HepG2 (cell line): ENCODE measurements at regions of chr14 and their contacts with region 1.

Region 1: GRCh38 chr14:102096214-102097114 is 9.6 kb upstream of the HSP90AA1 start:
- DNase-seq: peak; percentile 63
- ATAC-seq: peak; percentile 83
- H3K4me3 ChIP-seq: peak overlapping the region in 1 of 3 experiments; percentile 20; a peak in 1 of 6 replicates
- H3K27ac ChIP-seq: no peak overlapping the region
- H3K4me1 ChIP-seq: peaks cover 37% of the 10 kb centered on the region
- H3K27me3 ChIP-seq: peaks cover 2 to 25% of the 10 kb centered on the region in 2 experiments; a peak in 3 of 5 replicates
- CTCF ChIP-seq: peak; percentile 88
- EP300 ChIP-seq: no peak
- POLR2A ChIP-seq: no peak
- RAD21 ChIP-seq: peak; percentile 75

Region 2: DNA sequence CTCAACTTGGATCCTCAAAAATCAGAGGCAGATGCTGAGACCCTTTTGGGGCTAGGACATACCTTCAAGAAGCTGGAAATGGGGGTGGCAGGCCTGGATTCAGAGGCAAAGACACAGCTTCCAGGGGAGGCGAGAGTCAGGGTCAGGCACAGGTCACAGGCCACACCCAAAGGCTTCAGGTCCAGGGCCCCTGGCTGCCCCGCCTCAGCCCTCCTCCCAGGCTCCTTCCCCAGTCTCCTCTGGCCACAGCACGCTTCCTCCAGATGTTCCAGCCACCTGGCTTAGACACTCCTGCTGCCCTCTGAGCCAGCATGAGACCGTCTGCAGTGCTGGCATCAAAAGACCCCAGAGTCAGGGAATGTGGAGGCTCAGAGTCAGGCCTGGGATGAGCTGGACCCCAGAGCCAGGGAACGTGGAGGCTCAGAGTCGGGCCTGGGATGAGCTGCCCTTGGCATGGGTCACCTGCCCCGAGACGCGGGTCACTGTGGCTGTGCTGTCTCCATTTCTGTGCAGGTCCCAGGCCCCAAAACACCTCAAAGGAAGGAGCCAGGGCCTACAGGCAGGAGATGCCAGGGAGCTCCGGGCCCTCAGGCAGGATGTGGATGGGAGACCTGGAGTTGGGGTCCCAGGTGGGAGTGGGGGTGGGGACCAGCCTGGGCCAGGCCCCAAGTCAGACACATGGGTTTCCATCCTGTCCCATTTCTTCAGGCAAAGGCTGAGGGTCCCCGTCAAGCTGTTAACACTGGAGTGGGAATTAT is 476.3 kb before region 1 on chr14:
- CTCF ChIA-PET with region 1: no interaction called
- POLR2A ChIA-PET with region 1: no interaction called
- in situ Hi-C with region 1: no loop called
- intact Hi-C with region 1: no loop called
- DNase-seq: no peak
- ATAC-seq: no peak
- H3K4me3 ChIP-seq: no peak overlapping the region
- H3K27ac ChIP-seq: no peak overlapping the region
- H3K4me1 ChIP-seq: no peaks in the 10 kb centered on the region
- H3K27me3 ChIP-seq: peaks cover 0 to 20% of the 10 kb centered on the region in 2 experiments; a peak in 2 of 5 replicates
- CTCF ChIP-seq: no peak
- EP300 ChIP-seq: no peak
- POLR2A ChIP-seq: no peak
- RAD21 ChIP-seq: no peak

Region 3: DNA sequence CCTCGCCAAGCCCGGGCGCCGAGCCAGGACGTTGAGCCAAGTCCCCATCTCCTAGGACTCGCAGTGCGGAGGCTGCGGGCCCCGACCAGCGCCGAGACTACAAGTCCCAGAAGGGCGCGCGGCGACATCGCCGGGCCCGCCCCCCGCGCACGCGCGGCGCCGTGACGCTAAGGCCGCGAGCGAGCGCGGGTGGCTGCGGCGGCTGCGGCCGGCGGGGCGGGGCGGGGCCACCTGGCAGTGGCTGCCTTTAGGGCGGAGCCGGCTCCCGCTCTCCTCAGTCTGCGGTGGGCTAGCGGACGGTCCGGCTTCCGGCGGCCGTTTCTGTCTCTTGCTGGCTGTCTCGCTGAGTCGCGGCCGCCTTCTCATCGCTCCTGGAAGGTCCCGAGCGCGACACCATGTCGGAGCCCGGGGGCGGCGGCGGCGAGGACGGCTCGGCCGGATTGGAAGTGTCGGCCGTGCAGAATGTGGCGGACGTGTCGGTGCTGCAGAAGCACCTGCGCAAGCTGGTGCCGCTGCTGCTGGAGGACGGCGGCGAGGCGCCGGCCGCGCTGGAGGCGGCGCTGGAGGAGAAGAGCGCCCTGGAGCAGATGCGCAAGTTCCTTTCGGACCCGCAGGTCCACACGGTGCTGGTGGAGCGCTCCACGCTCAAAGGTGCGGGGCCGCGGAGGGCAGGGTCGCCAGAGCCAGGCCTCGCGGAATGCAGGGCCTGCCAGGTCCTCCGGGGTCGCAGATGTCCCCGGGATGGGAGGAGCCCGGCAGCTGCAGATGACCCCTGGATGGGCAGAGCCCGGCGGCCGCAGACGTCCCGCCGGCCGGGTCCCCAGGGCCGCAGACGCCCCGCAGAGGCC is 131.9 kb before region 1 on chr14 and contains the start of gene DYNC1H1:
- CTCF ChIA-PET with region 1: interaction called, 14 read pairs
- POLR2A ChIA-PET with region 1: no interaction called
- in situ Hi-C with region 1: loop called (anchors 5 kb)
- intact Hi-C with region 1: loop called (anchors 2 kb)
- DNase-seq: peak; percentile 83
- ATAC-seq: peak; percentile 74
- H3K4me3 ChIP-seq: peak within 1 kb of the TSS; percentile 96 to 100 (median 99)
- H3K27ac ChIP-seq: peak within 1 kb of the TSS; percentile 90
- H3K4me1 ChIP-seq: peaks cover 75% of the 10 kb centered on the region
- H3K27me3 ChIP-seq: no peaks in the 10 kb centered on the region; a peak in 1 of 5 replicates
- CTCF ChIP-seq: no peak
- EP300 ChIP-seq: no peak
- POLR2A ChIP-seq: peak; percentile 96 to 97
- RAD21 ChIP-seq: peak; percentile 44; the same call in 1 of the 2 replicates
- total RNA-seq, gene DYNC1H1: 239 and 386 TPM in 2 replicates

Region 4: GRCh38 chr14:102046343-102047278 is 49.9 kb before region 1 on chr14:
- CTCF ChIA-PET with region 1: interaction called, 18 read pairs
- POLR2A ChIA-PET with region 1: no interaction called
- in situ Hi-C with region 1: no loop called
- intact Hi-C with region 1: loop called (anchors 1 kb)
- DNase-seq: peak; percentile 70
- ATAC-seq: peak; percentile 92
- H3K4me3 ChIP-seq: no peak overlapping the region
- H3K27ac ChIP-seq: no peak overlapping the region
- H3K4me1 ChIP-seq: no peaks in the 10 kb centered on the region
- H3K27me3 ChIP-seq: no peaks in the 10 kb centered on the region
- CTCF ChIP-seq: peak; percentile 73
- EP300 ChIP-seq: no peak
- POLR2A ChIP-seq: no peak
- RAD21 ChIP-seq: peak; percentile 61

Region 5: GRCh38 chr14:102063091-102063802 is 33.2 kb before region 1 on chr14:
- CTCF ChIA-PET with region 1: interaction called, 22 read pairs
- POLR2A ChIA-PET with region 1: interaction called, 9 read pairs
- in situ Hi-C with region 1: loop called (anchors 5 kb)
- intact Hi-C with region 1: loop called (anchors 1 kb)
- DNase-seq: peak; percentile 83
- ATAC-seq: peak; percentile 79
- H3K4me3 ChIP-seq: peak overlapping the region; percentile 22 to 68 (median 47); a peak in 5 of 6 replicates
- H3K27ac ChIP-seq: no peak overlapping the region
- H3K4me1 ChIP-seq: peaks cover 19% of the 10 kb centered on the region
- H3K27me3 ChIP-seq: peaks cover 2 to 3% of the 10 kb centered on the region in 2 experiments; a peak in 3 of 5 replicates
- CTCF ChIP-seq: peak; percentile 57
- EP300 ChIP-seq: no peak
- POLR2A ChIP-seq: no peak
- RAD21 ChIP-seq: 0 out of 2 replicates have a peak, but pooled peaks have one; percentile 13

Region 6: GRCh38 chr14:102209217-102209966 is 112.9 kb after region 1 on chr14:
- CTCF ChIA-PET with region 1: no interaction called
- POLR2A ChIA-PET with region 1: no interaction called
- in situ Hi-C with region 1: no loop called
- intact Hi-C with region 1: loop called (anchors 5 kb)
- DNase-seq: peak; percentile 58
- ATAC-seq: peak; percentile 90
- H3K4me3 ChIP-seq: no peak overlapping the region
- H3K27ac ChIP-seq: no peak overlapping the region
- H3K4me1 ChIP-seq: no peaks in the 10 kb centered on the region
- H3K27me3 ChIP-seq: no peaks in the 10 kb centered on the region
- CTCF ChIP-seq: peak; percentile 62
- EP300 ChIP-seq: no peak
- POLR2A ChIP-seq: no peak
- RAD21 ChIP-seq: peak; percentile 44